Activated T-helper 1 cell treated with anti-CD3 and anti-CD28 coated beads, Interleukin-12 subunit alpha, Interleukin-12 subunit beta, Interleukin-2, Interleukin-4 antibody, amounts not matched to agents 30 ng/mL and 10 ng/mL and 1 ng/mL, durations not matched to agents 14 hours and 24 hours and 36 hours (primary cell): ENCODE measurements at regions of chr7 and their contacts with region 1.

Region 1: GRCh38 chr7:30504347-30505173 is at the start of gene GGCT:
- DNase-seq: peak; percentile 96
- H3K4me3 Mint-ChIP-seq: peak within 1 kb of the TSS; percentile 87
- H3K27ac Mint-ChIP-seq: peak within 1 kb of the TSS; percentile 89
- H3K4me1 Mint-ChIP-seq: peaks cover 53% of the 10 kb centered on the region
- H3K27me3 Mint-ChIP-seq: no peaks in the 10 kb centered on the region
- total RNA-seq, gene GGCT: 75.4 and 79.0 TPM in 2 replicates

Region 2: GRCh38 chr7:29771081-29771816 is 733.3 kb before region 1 on chr7:
- intact Hi-C with region 1: no loop called
- DNase-seq: no peak
- H3K4me3 Mint-ChIP-seq: no peak overlapping the region
- H3K27ac Mint-ChIP-seq: no peak overlapping the region
- H3K4me1 Mint-ChIP-seq: no peaks in the 10 kb centered on the region
- H3K27me3 Mint-ChIP-seq: peaks cover 4% of the 10 kb centered on the region

Region 3: GRCh38 chr7:30134611-30135545 is 369.7 kb before region 1 on chr7 and contains the start of gene MTURN:
- intact Hi-C with region 1: loop called (anchors 1 kb)
- DNase-seq: peak; percentile 83
- H3K4me3 Mint-ChIP-seq: peak within 1 kb of the TSS; percentile 89
- H3K27ac Mint-ChIP-seq: peak within 1 kb of the TSS; percentile 80
- H3K4me1 Mint-ChIP-seq: peaks cover 6% of the 10 kb centered on the region
- H3K27me3 Mint-ChIP-seq: peaks cover 17% of the 10 kb centered on the region
- total RNA-seq, gene MTURN: 3.9 and 4.3 TPM in 2 replicates

Region 4: GRCh38 chr7:30478349-30479201 is 26.0 kb before region 1 on chr7 and contains the start of gene NOD1:
- intact Hi-C with region 1: loop called (anchors 1 kb)
- DNase-seq: peak; percentile 71
- H3K4me3 Mint-ChIP-seq: peak within 1 kb of the TSS; percentile 90
- H3K27ac Mint-ChIP-seq: peak within 1 kb of the TSS; percentile 91
- H3K4me1 Mint-ChIP-seq: peaks cover 61% of the 10 kb centered on the region
- H3K27me3 Mint-ChIP-seq: no peaks in the 10 kb centered on the region
- total RNA-seq, gene NOD1: 9.1 and 13.1 TPM in 2 replicates

Region 5: DNA sequence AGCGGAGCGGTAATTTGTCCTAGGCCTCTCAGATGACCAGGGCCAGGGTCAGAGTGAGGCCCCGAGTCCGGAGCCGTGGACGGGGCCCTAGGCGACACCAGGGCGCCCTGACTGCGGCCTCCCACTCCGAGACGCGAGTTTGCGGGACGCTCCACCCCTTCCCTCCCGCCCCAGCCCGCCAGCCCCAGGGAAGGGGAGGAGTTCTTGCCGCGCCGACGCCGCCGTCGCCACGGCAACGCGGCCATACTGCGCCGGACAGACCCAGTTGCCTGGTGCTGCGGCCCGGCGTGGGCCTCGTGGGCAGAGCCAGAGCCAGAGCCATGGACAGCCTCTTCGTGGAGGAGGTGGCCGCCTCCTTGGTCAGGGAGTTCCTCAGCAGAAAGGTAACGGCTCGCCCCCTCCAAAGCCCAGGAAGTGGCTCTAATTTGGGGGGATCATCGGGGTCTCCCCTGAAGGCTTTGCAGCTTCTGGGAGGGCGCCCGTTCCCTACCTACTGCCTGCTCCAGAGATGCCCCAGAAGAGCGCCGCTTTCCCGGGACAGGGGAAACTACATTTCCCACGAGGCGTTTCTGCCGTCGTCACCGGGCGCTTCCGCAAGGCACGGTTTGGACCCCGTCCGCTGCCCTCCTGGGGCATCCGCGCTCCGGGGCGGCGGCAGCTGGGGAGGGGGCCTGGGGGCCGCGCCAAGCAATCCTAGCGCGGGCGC is 266.8 kb after region 1 on chr7 and contains the start of gene MINDY4:
- intact Hi-C with region 1: loop called (anchors 1 kb)
- DNase-seq: peak; percentile 57
- H3K4me3 Mint-ChIP-seq: peak within 1 kb of the TSS; percentile 83
- H3K27ac Mint-ChIP-seq: peak within 1 kb of the TSS; percentile 77
- H3K4me1 Mint-ChIP-seq: peaks cover 12% of the 10 kb centered on the region
- H3K27me3 Mint-ChIP-seq: peaks cover 7% of the 10 kb centered on the region
- total RNA-seq, gene MINDY4: 0.96 and 2.2 TPM in 2 replicates